Activated naive CD4-positive, alpha-beta T cell treated with anti-CD3 and anti-CD28 coated beads, Interleukin-2, amount 10 ng/mL, durations not matched to agents 7 days and 5 days (primary cell): ENCODE measurements at regions of chr19 and their contacts with region 1.

Region 1: GRCh38 chr19:14366498-14366915 is 14.7 kb upstream of the ADGRE5 start:
- DNase-seq: peak; percentile 96
- H3K4me3 Mint-ChIP-seq: peak overlapping the region; percentile 57
- H3K27ac Mint-ChIP-seq: peak overlapping the region; percentile 90
- H3K4me1 Mint-ChIP-seq: peaks cover 80% of the 10 kb centered on the region
- H3K27me3 Mint-ChIP-seq: no peaks in the 10 kb centered on the region

Region 2: GRCh38 chr19:14023404-14024235 is 342.9 kb before region 1 on chr19:
- CTCF ChIA-PET with region 1: no interaction called
- DNase-seq: no peak
- H3K4me3 Mint-ChIP-seq: no peak overlapping the region
- H3K27ac Mint-ChIP-seq: no peak overlapping the region
- H3K4me1 Mint-ChIP-seq: peaks cover 30% of the 10 kb centered on the region
- H3K27me3 Mint-ChIP-seq: peaks cover 10% of the 10 kb centered on the region

Region 3: GRCh38 chr19:14347999-14348889 is 18.3 kb before region 1 on chr19:
- CTCF ChIA-PET with region 1: no interaction called
- DNase-seq: peak; percentile 75
- H3K4me3 Mint-ChIP-seq: peak overlapping the region; percentile 6
- H3K27ac Mint-ChIP-seq: peak overlapping the region; percentile 24
- H3K4me1 Mint-ChIP-seq: peaks cover 34% of the 10 kb centered on the region
- H3K27me3 Mint-ChIP-seq: peaks cover 26% of the 10 kb centered on the region

Region 4: DNA sequence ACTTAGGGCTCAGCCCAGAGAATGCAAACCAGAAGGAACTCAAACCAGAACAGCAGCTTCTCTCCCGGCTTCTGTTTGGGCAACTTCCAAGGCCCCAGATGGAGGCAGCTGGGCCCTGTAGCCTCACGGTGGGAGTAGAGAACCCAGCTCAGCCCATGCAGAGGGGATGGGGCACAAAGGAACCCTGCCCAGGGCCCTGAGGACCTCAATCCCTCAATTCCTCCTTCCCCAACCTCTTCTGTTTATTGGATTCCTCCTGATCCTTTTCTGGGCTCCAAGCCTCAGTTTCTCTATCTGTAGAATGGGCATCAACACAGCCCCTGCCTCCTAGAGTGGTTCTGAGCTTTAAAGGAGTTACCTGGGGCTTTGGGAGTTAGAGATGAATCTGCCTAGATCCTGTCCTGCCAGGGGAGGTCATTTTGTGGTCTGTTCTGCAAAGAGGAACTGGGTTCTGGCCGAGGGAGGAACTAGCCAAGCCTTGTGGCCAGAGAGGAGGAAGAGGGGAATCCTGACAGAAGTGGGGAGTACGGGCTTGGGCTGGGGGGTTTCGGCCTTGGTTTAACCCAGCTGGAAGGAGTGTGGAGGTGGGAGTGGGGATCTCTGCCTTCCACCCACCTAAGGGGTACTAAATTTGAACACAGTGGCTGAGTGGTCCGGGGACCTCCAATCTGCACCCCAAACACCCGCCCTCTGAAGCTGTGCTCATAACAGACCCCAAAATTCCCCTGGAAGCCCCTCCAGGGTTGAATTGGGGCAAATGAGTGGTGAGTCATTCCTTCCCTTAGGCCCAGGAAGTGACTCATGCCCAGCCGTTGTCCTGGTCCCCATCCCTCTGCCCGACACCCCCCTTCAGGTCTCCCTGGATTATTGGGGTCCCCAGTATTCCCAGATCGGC is 17.4 kb after region 1 on chr19:
- CTCF ChIA-PET with region 1: interaction called, 51 read pairs
- DNase-seq: peak; percentile 70
- H3K4me3 Mint-ChIP-seq: peak overlapping the region; percentile 90
- H3K27ac Mint-ChIP-seq: peak overlapping the region; percentile 96
- H3K4me1 Mint-ChIP-seq: peaks cover 51% of the 10 kb centered on the region
- H3K27me3 Mint-ChIP-seq: no peaks in the 10 kb centered on the region

Region 5: GRCh38 chr19:14405758-14406644 is 39.5 kb after region 1 on chr19:
- CTCF ChIA-PET with region 1: interaction called, 93 read pairs
- DNase-seq: peak; percentile 91
- H3K4me3 Mint-ChIP-seq: no peak overlapping the region
- H3K27ac Mint-ChIP-seq: peak overlapping the region; percentile 81
- H3K4me1 Mint-ChIP-seq: peaks cover 22% of the 10 kb centered on the region
- H3K27me3 Mint-ChIP-seq: no peaks in the 10 kb centered on the region